ENCODE measurements at regions of chr1 and their contacts with region 1.

Region 1: GRCh38 chr1:89632657-89633247 is at the start of gene LRRC8C:
- DNase-seq: peak; percentile 86
- H3K4me3 Mint-ChIP-seq: peak within 1 kb of the TSS; percentile 91
- H3K27ac Mint-ChIP-seq: peak within 1 kb of the TSS; percentile 93
- H3K4me1 Mint-ChIP-seq: peaks cover 65% of the 10 kb centered on the region
- H3K27me3 Mint-ChIP-seq: no peaks in the 10 kb centered on the region
- total RNA-seq, gene LRRC8C: 13.6 TPM

Region 2: DNA sequence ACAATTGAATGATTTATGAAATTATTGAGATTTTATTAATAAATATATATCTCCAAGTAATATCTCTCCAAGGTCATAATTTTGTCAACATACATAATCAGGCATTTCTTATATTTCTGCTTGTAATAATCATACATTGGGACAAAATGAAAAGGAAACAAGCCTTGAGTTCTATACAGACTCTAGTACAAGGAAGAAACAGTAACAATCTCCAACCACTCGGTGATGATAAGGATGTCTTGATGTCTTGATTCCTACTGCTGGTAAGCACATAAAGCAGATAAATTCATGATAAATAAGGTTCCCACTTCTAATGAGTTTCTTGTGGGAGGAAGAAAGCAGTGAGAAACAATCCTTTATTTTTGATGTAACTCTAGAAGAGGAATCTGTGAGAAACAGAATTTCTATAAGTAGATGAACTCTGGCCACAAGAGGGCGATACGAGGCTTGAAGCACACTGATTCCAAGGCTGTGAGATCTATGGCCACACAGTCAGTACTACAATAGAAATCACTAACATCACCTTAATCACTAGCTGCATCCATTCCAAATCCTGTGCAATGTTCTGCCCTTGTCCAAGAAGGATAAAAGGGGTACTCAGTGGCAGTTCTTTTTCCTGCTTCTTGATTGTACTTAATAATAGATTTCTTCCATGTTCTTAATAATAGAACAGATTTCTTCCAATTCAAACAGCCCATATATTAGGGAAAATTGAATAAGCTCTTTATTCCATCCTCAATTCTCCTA is 149.6 kb before region 1 on chr1:
- CTCF ChIA-PET with region 1: interaction called, 11 read pairs
- intact Hi-C with region 1: no loop called
- DNase-seq: peak; percentile 93
- H3K4me3 Mint-ChIP-seq: no peak overlapping the region
- H3K27ac Mint-ChIP-seq: no peak overlapping the region
- H3K4me1 Mint-ChIP-seq: peaks cover 12% of the 10 kb centered on the region
- H3K27me3 Mint-ChIP-seq: no peaks in the 10 kb centered on the region

Region 3: GRCh38 chr1:89605692-89606091 is 27.1 kb before region 1 on chr1:
- CTCF ChIA-PET with region 1: interaction called, 78 read pairs
- intact Hi-C with region 1: loop called (anchors 1 kb)
- DNase-seq: no peak
- H3K4me3 Mint-ChIP-seq: no peak overlapping the region
- H3K27ac Mint-ChIP-seq: no peak overlapping the region
- H3K4me1 Mint-ChIP-seq: peaks cover 95% of the 10 kb centered on the region
- H3K27me3 Mint-ChIP-seq: no peaks in the 10 kb centered on the region

Region 4: GRCh38 chr1:89657886-89658285 is 25.1 kb after region 1 on chr1:
- CTCF ChIA-PET with region 1: interaction called, 4 read pairs
- intact Hi-C with region 1: loop called (anchors 1 kb)
- DNase-seq: peak; percentile 41
- H3K4me3 Mint-ChIP-seq: no peak overlapping the region
- H3K27ac Mint-ChIP-seq: peak overlapping the region; percentile 44
- H3K4me1 Mint-ChIP-seq: peaks cover 83% of the 10 kb centered on the region
- H3K27me3 Mint-ChIP-seq: no peaks in the 10 kb centered on the region

Region 5: DNA sequence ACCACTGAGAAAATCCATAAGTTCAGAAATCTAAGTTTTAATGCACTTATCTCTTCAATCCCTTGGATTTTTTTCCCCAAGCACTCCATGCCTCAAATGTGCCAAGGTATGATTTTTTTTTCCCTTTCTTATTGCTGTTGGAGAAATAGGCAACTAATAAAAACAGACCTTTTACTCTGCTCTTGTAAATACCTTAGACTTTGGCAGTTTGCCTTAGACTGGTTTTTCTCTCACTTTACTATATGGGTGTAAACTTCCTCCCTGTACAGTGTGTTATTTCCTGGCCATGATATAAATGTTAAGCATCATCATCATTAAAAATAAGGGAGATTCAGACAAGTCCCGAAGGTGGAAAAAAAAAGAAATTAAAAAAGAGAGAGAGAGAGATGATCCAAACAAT is 65.9 kb after region 1 on chr1:
- CTCF ChIA-PET with region 1: interaction called, 4 read pairs
- intact Hi-C with region 1: loop called (anchors 1 kb)
- DNase-seq: no peak
- H3K4me3 Mint-ChIP-seq: no peak overlapping the region
- H3K27ac Mint-ChIP-seq: peak overlapping the region; percentile 88
- H3K4me1 Mint-ChIP-seq: peaks cover 83% of the 10 kb centered on the region
- H3K27me3 Mint-ChIP-seq: no peaks in the 10 kb centered on the region

Region 6: GRCh38 chr1:89762779-89763648 is 130.3 kb after region 1 on chr1:
- CTCF ChIA-PET with region 1: interaction called, 112 read pairs
- intact Hi-C with region 1: loop called (anchors 1 kb)
- DNase-seq: peak; percentile 92
- H3K4me3 Mint-ChIP-seq: peak overlapping the region; percentile 86
- H3K27ac Mint-ChIP-seq: peak overlapping the region; percentile 81
- H3K4me1 Mint-ChIP-seq: peaks cover 42% of the 10 kb centered on the region
- H3K27me3 Mint-ChIP-seq: no peaks in the 10 kb centered on the region

Region 7: DNA sequence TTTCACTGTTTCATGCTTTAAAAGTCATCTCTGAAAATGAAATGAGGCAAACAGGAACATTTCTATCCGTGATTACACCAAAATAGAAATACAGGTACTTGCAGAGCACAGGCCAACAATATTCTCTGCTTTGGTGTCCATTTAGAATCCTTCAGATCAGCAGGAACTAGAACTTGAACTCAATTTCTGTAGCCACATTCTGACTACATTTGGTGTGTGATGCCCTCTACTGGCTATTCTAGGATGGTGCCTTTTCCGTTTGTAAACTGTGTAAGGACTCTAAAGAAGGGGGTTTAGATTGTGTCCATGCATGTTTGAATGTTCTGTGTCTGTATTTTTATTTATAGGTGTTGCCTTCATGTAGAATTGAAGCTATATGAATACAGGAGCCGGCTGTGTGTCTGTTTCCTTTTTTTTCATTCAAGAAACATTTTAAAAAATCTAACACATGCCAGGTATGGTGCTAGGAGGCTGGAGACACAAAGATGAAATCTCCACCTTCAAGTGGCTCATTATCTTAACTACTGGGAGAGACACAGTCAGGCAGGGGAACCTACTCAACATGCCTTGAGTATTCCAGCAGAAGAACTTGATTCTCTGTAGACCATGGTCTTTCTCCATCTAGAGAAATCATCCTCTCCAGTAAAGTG is 354.5 kb after region 1 on chr1:
- CTCF ChIA-PET with region 1: interaction called, 4 read pairs
- intact Hi-C with region 1: loop called (anchors 2 kb)
- DNase-seq: peak; percentile 68
- H3K4me3 Mint-ChIP-seq: no peak overlapping the region
- H3K27ac Mint-ChIP-seq: no peak overlapping the region
- H3K4me1 Mint-ChIP-seq: peaks cover 12% of the 10 kb centered on the region
- H3K27me3 Mint-ChIP-seq: no peaks in the 10 kb centered on the region

Measured in activated naive CD4-positive, alpha-beta T cell treated with anti-CD3 and anti-CD28 coated beads for 36 hours (primary cell).